PC-9 (cell line): ENCODE measurements at regions of chr11 and their contacts with region 1.

Region 1: GRCh38 chr11:33857933-33858371 is 33.9 kb downstream of the LMO2 start:
- DNase-seq: peak; percentile 46 to 72
- H3K4me3 ChIP-seq: no peak overlapping the region
- H3K27ac ChIP-seq: no peak overlapping the region
- H3K4me1 ChIP-seq: no peaks in the 10 kb centered on the region
- H3K27me3 ChIP-seq: peaks cover 39% of the 10 kb centered on the region; the same call in 1 of the 2 replicates
- CTCF ChIP-seq: peak; percentile 98

Region 2: DNA sequence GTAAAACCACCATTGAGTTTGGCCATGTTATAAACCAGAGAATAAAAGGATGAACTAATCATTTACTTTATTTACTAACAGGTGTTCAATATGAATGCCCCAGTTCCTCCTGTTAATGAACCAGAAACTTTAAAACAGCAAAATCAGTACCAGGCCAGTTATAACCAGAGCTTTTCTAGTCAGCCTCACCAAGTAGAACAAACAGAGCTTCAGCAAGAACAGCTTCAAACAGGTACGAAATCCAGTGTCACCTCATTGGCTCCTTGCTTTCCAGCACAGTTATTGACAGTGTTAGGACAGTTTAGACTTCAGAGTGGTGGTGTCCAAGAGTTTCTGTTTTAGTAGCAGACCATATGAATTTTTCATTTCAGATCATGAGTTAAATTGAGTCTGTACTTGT is 233.9 kb after region 1 on chr11:
- CTCF ChIA-PET with region 1: no interaction called
- POLR2A ChIA-PET with region 1: no interaction called
- intact Hi-C with region 1: loop called (anchors 5 kb)
- DNase-seq: no peak
- H3K4me3 ChIP-seq: no peak overlapping the region
- H3K27ac ChIP-seq: no peak overlapping the region
- H3K4me1 ChIP-seq: no peaks in the 10 kb centered on the region
- H3K27me3 ChIP-seq: no peaks in the 10 kb centered on the region
- CTCF ChIP-seq: no peak